ENCODE measurements at regions of chrX and their contacts with region 1.

Region 1: GRCh38 chrX:115344885-115345614 is 55.5 kb downstream of the LUZP4 start:
- DNase-seq: peak; percentile 26
- ATAC-seq: peak; percentile 90
- H3K4me3 Mint-ChIP-seq: no peak overlapping the region
- H3K27ac Mint-ChIP-seq: no peak overlapping the region
- H3K4me1 Mint-ChIP-seq: peaks cover 15% of the 10 kb centered on the region
- H3K27me3 Mint-ChIP-seq: peaks cover 6% of the 10 kb centered on the region
- CTCF ChIP-seq: no peak

Region 2: GRCh38 chrX:115616943-115617563 is 272.0 kb after region 1 on chrX:
- CTCF ChIA-PET with region 1: no interaction called
- POLR2A ChIA-PET with region 1: interaction called, 12 read pairs
- DNase-seq: no peak
- ATAC-seq: peak; percentile 67
- H3K4me3 Mint-ChIP-seq: no peak overlapping the region
- H3K27ac Mint-ChIP-seq: peak overlapping the region; percentile 78
- H3K4me1 Mint-ChIP-seq: peaks cover 38% of the 10 kb centered on the region
- H3K27me3 Mint-ChIP-seq: no peaks in the 10 kb centered on the region
- CTCF ChIP-seq: no peak

Measured in WTC11 (cell line).